ENCODE measurements at regions of chr9 and their contacts with region 1.

Region 1: DNA sequence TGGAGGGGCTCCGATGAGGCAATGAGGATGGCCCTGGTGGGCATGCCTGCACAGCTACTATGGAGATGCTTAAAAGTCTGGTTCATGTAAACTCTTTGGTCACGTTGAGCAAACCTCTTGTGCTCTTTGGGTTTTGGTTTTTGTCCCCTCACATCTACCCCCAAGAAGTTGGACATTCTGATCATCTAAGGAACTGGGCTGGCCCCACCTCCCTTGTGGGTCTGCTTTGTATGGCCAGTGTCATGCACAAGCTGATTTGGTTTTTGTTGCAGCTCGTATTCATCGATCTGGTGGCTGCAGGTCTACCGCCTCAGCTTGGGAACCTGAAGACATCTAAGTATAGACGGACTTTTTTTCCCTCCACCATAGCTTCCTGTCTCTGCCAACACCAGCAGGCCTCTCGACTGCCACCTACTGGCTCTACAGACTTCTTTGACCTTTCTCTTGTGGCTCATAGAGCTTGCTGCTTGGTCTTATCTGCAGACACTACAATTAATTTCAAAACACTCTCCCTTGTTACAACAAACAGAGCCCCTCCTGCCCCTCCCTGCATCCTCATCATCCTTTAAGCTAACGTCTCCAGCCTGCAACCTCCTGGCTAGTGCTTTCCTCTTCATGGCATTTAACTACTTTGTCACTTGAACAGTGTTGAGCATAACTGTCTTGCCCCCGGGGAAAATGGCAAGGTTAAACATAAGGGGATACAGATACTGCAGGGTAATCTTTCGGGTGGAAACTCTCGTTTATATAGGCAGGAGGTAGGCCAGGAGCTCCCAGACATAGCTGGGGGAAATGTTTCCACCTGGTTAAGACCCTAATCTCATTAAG is 34.5 kb downstream of the TSTD2 start:
- DNase-seq: peak; percentile 71
- H3K4me3 ChIP-seq: no peak overlapping the region
- H3K27ac ChIP-seq: peak overlapping the region in 1 of 2 experiments; percentile 58; a peak in 2 of 4 replicates
- H3K4me1 ChIP-seq: peaks cover 0 to 34% of the 10 kb centered on the region in 2 experiments; a peak in 2 of 4 replicates
- H3K27me3 ChIP-seq: no peaks in the 10 kb centered on the region
- CTCF ChIP-seq: peak; percentile 88
- EP300 ChIP-seq: no peak
- RAD21 ChIP-seq: peak; percentile 81

Region 2: GRCh38 chr9:97459099-97459725 is 139.5 kb before region 1 on chr9:
- CTCF ChIA-PET with region 1: interaction called, 13 read pairs
- POLR2A ChIA-PET with region 1: no interaction called
- DNase-seq: no peak
- H3K4me3 ChIP-seq: no peak overlapping the region
- H3K27ac ChIP-seq: no peak overlapping the region
- H3K4me1 ChIP-seq: no peaks in the 10 kb centered on the region
- H3K27me3 ChIP-seq: no peaks in the 10 kb centered on the region
- CTCF ChIP-seq: no peak
- EP300 ChIP-seq: no peak
- RAD21 ChIP-seq: no peak

Region 3: GRCh38 chr9:97487107-97487506 is 111.6 kb before region 1 on chr9:
- CTCF ChIA-PET with region 1: interaction called, 37 read pairs
- POLR2A ChIA-PET with region 1: no interaction called
- DNase-seq: no peak
- H3K4me3 ChIP-seq: no peak overlapping the region
- H3K27ac ChIP-seq: no peak overlapping the region
- H3K4me1 ChIP-seq: peaks cover 0 to 2% of the 10 kb centered on the region in 2 experiments; a peak in 1 of 4 replicates
- H3K27me3 ChIP-seq: no peaks in the 10 kb centered on the region
- CTCF ChIP-seq: peak; percentile 28; the same call in 1 of the 2 replicates
- EP300 ChIP-seq: no peak
- RAD21 ChIP-seq: no peak

Region 4: GRCh38 chr9:97518909-97519307 is 79.8 kb before region 1 on chr9:
- CTCF ChIA-PET with region 1: interaction called, 26 read pairs
- POLR2A ChIA-PET with region 1: no interaction called
- DNase-seq: no peak
- H3K4me3 ChIP-seq: no peak overlapping the region
- H3K27ac ChIP-seq: no peak overlapping the region
- H3K4me1 ChIP-seq: peaks cover 0 to 61% of the 10 kb centered on the region in 2 experiments; a peak in 1 of 4 replicates
- H3K27me3 ChIP-seq: no peaks in the 10 kb centered on the region
- CTCF ChIP-seq: no peak
- EP300 ChIP-seq: no peak
- RAD21 ChIP-seq: no peak

Region 5: GRCh38 chr9:97575673-97576200 is 22.9 kb before region 1 on chr9:
- CTCF ChIA-PET with region 1: interaction called, 101 read pairs
- POLR2A ChIA-PET with region 1: no interaction called
- DNase-seq: no peak
- H3K4me3 ChIP-seq: no peak overlapping the region
- H3K27ac ChIP-seq: no peak overlapping the region
- H3K4me1 ChIP-seq: peaks cover 0 to 16% of the 10 kb centered on the region in 2 experiments; a peak in 1 of 4 replicates
- H3K27me3 ChIP-seq: no peaks in the 10 kb centered on the region
- CTCF ChIP-seq: no peak
- EP300 ChIP-seq: no peak
- RAD21 ChIP-seq: no peak

Region 6: GRCh38 chr9:97632985-97633858 is 34.5 kb after region 1 on chr9 and contains the starts of genes NCBP1 and TSTD2:
- CTCF ChIA-PET with region 1: interaction called, 11 read pairs
- POLR2A ChIA-PET with region 1: interaction called, 7 read pairs
- DNase-seq: peak; percentile 94
- H3K4me3 ChIP-seq: peak within 1 kb of the TSS; percentile 92 to 99
- H3K27ac ChIP-seq: peak within 1 kb of the TSS; percentile 99 to 100
- H3K4me1 ChIP-seq: peaks cover 19 to 20% of the 10 kb centered on the region in 2 experiments; a peak in 3 of 4 replicates
- H3K27me3 ChIP-seq: no peaks in the 10 kb centered on the region
- CTCF ChIP-seq: no peak
- EP300 ChIP-seq: no peak
- RAD21 ChIP-seq: no peak
- polyA plus RNA-seq, gene NCBP1: 11.3 and 15.6 TPM in 2 replicates
- polyA plus RNA-seq, gene TSTD2: 11.5 and 18.6 TPM in 2 replicates

Region 7: DNA sequence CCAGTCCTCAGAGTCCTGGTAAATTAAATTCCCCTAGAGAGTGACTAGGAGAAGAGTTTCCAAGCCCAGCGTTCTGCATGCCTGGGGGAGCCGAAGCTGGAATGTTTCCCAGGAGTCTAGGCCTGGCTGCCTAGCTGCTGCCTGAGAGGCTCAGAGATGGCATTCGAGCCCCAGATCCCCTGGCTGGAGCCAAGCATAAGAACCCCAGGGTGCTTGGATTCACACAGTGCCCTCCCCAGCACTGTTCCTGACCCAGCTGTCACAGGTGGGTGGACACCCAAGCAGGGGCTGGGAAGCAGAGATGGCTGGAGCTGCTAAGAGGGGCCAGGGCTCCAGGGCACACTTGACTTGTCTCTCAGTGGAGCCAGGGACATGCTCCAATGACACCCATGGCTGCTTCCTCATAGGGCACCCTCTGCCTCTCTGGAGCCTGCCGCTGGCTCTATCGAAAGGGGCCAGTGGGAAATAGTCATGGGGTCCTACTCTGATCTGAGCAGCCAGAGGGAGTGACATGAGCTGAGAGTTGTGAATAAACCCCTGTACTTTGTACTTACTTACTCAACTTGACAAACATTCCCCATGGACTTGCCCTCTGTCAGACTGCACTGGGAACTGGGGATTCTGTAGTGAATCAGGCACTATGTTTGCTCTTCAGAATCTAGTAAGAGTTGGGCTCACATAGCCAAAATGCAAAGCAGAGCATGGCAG is 161.1 kb after region 1 on chr9:
- CTCF ChIA-PET with region 1: no interaction called
- POLR2A ChIA-PET with region 1: no interaction called
- DNase-seq: no peak
- H3K4me3 ChIP-seq: no peak overlapping the region
- H3K27ac ChIP-seq: no peak overlapping the region
- H3K4me1 ChIP-seq: no peaks in the 10 kb centered on the region; a peak in 1 of 4 replicates
- H3K27me3 ChIP-seq: peaks cover 15% of the 10 kb centered on the region; the same call in 1 of the 2 replicates
- CTCF ChIP-seq: no peak
- EP300 ChIP-seq: no peak
- RAD21 ChIP-seq: no peak